Psoas muscle (tissue), 8 donors: ENCODE measurements at regions of chr17 and their contacts with region 1.

Region 1: GRCh38 chr17:6843241-6843880 is 11.8 kb upstream of the TEKT1 start:
- DNase-seq: no peak
- ATAC-seq: no peak
- H3K4me3 ChIP-seq: no peak overlapping the region
- H3K27ac ChIP-seq: no peak overlapping the region
- H3K4me1 ChIP-seq: no peaks in the 10 kb centered on the region
- H3K27me3 ChIP-seq: peaks cover 0 to 33% (median 2%) of the 10 kb centered on the region in 3 donors
- CTCF ChIP-seq: peak; percentile 59

Region 2: DNA sequence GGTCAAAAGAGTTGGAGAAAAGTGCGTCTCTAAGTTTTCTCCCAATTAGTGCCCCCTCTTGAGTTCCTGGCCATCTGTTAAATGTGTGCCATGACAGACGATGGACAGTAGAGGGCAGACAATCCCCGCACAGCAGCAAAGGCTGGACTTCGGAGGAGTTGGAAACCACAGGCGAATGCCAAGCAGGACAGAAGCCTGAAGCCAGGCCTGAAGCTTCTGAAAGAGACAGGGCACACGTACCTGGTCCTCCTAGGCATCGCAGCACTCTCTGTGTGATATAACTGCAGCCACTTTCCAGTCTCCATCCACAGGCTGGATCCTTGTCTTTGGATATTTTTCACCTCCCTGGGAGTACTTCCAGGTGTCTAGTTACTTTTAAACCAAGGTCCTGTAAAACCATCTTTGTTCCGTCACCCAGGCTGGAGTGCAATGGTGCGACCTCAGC is 177.3 kb before region 1 on chr17:
- intact Hi-C with region 1: loop called in 1 of 2 experiments (anchors 2 kb)
- DNase-seq: peak; percentile 61 to 79
- ATAC-seq: peak; percentile 89 to 95 (median 94)
- H3K4me3 ChIP-seq: no peak overlapping the region
- H3K27ac ChIP-seq: no peak overlapping the region
- H3K4me1 ChIP-seq: no peaks in the 10 kb centered on the region
- H3K27me3 ChIP-seq: peaks cover 0 to 13% (median 3%) of the 10 kb centered on the region in 3 donors
- CTCF ChIP-seq: peak; percentile 79